BJ (cell line): ENCODE measurements at regions of chr6 and their contacts with region 1.

Region 1: GRCh38 chr6:157045831-157046454 is 268.8 kb downstream of the ARID1B start:
- DNase-seq: no peak
- H3K4me3 ChIP-seq: no peak overlapping the region
- H3K27me3 ChIP-seq: no peaks in the 10 kb centered on the region
- CTCF ChIP-seq: peak; percentile 70

Region 2: DNA sequence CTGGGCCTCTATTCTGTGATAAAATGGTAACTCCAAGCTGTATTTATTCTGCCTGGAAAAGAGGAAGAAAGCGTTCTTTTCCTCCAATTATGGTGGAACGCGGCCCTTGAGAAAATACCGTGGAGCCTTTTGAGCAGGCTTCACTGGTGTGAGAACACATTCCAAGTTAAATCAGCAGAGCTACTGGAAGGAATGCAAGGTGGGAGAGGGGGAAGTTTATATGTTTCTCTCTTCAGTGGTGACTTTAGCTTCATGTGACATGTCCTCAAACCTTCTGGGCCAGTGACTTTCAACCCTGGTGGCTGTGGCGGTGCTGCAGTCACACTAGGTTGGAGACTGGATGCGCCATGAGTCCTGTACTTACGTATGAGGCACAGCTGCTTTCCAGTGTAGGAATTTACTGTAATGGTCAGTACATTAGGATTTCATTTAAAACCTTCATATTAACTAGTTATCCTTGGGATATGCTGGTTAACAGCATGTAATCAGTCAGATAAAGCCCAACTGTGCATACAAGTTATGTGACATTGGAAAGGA is 47.1 kb before region 1 on chr6:
- CTCF ChIA-PET with region 1: no interaction called
- POLR2A ChIA-PET with region 1: no interaction called
- DNase-seq: no peak
- H3K4me3 ChIP-seq: no peak overlapping the region
- H3K27me3 ChIP-seq: no peaks in the 10 kb centered on the region
- CTCF ChIP-seq: no peak

Region 3: DNA sequence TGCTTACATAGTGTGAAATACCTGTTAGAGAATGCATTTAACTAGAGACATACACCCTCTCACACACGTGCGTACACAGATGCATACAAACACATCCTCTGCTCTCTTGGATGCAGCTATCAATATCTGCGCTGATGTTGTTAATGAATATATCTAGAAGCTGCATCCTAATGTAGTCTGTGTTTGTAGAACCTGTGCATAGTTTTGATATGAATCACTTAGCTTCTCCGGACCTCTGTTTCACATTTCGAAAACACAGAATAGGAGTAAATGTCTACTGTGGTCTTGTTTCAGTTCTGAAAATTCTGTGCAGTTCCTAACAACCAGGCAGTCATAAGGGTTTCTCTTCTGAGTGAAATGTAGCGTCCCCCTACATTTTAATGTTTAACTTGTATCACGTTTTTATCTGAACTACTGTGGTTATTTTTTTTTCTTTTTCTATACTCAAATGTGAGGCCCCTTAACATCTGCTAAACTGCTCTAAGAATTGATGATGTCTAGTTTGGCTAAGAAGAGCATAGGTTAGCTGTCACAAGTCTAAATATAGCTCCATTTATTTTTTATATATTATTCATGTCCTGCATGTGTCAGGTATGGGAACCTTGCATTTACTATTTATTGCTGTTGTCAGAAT is 22.9 kb after region 1 on chr6:
- CTCF ChIA-PET with region 1: interaction called, 10 read pairs
- POLR2A ChIA-PET with region 1: no interaction called
- DNase-seq: no peak
- H3K4me3 ChIP-seq: no peak overlapping the region
- H3K27me3 ChIP-seq: no peaks in the 10 kb centered on the region
- CTCF ChIP-seq: no peak

Region 4: DNA sequence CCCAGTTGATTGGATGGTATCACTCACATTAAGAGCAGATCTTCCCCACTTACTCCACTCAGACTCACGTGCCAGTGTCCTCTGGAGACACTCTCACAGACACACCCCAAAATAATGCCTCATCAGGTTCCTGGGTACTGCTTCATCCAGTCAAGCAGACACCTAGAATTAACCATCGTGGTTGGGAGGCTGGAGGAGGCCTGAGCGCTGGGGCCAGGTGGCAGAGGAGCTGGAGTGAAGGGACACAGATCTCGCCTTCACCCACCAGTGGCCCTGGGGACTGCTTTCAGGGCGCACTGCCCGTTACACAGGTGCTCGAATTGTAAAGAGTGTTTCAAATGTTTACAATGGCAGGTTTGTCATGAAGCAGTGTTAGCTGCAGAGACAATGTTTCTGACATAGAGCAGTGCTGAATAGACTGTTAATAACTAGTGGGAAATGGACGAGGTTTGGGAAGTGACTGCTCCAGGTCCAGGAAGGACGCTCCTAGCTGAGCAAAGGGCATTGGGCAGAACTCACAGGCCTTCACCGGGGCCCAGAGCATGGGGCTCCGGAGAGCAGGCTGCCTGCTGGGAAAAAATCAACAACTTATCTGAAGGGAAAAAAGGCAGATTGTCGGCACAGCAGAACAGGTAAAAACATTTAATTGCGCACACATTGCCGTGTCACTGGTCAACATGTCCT is 238.9 kb after region 1 on chr6:
- CTCF ChIA-PET with region 1: no interaction called
- POLR2A ChIA-PET with region 1: no interaction called
- DNase-seq: no peak
- H3K4me3 ChIP-seq: no peak overlapping the region
- H3K27me3 ChIP-seq: no peaks in the 10 kb centered on the region
- CTCF ChIP-seq: no peak